ENCODE measurements at regions of chr11 and their contacts with region 1.

Region 1: GRCh38 chr11:47407746-47408590 is at the start of gene SLC39A13:
- DNase-seq: peak; percentile 92 to 94
- ATAC-seq: peak; percentile 84 to 93 (median 89)
- H3K4me3 ChIP-seq: peak within 1 kb of the TSS; percentile 64
- H3K4me3 Mint-ChIP-seq: peak within 1 kb of the TSS; percentile 97
- H3K27ac ChIP-seq: peak within 1 kb of the TSS; percentile 86
- H3K27ac Mint-ChIP-seq: peak within 1 kb of the TSS; percentile 90 to 92
- H3K4me1 ChIP-seq: peaks cover 26% of the 10 kb centered on the region
- H3K4me1 Mint-ChIP-seq: peaks cover 23 to 31% of the 10 kb centered on the region in 2 donors
- H3K27me3 ChIP-seq: no peaks in the 10 kb centered on the region
- H3K27me3 Mint-ChIP-seq: no peaks in the 10 kb centered on the region
- CTCF ChIP-seq: peak; percentile 94
- total RNA-seq, gene SLC39A13: 29.1 to 34.7 (median 32.6) TPM

Region 2: GRCh38 chr11:47176328-47177228 is 231.4 kb before region 1 on chr11 and contains the start of gene ARFGAP2:
- intact Hi-C with region 1: loop called (anchors 10 kb)
- DNase-seq: peak; percentile 97 to 98
- ATAC-seq: peak; percentile 89 to 97 (median 94)
- H3K4me3 ChIP-seq: peak within 1 kb of the TSS; percentile 91
- H3K4me3 Mint-ChIP-seq: peak within 1 kb of the TSS; percentile 97
- H3K27ac ChIP-seq: peak within 1 kb of the TSS; percentile 95
- H3K27ac Mint-ChIP-seq: peak within 1 kb of the TSS; percentile 96
- H3K4me1 ChIP-seq: peaks cover 33% of the 10 kb centered on the region
- H3K4me1 Mint-ChIP-seq: peaks cover 24 to 47% of the 10 kb centered on the region in 2 donors
- H3K27me3 ChIP-seq: no peaks in the 10 kb centered on the region
- H3K27me3 Mint-ChIP-seq: peaks cover 0 to 3% of the 10 kb centered on the region in 2 donors
- CTCF ChIP-seq: no peak
- total RNA-seq, gene ARFGAP2: 199 to 236 (median 228) TPM

Region 3: GRCh38 chr11:47259178-47259977 is 148.6 kb before region 1 on chr11:
- intact Hi-C with region 1: loop called (anchors 5 kb)
- DNase-seq: peak in 1 of 2 donors; percentile 62
- ATAC-seq: peak; percentile 54 to 58 (median 58)
- H3K4me3 ChIP-seq: no peak overlapping the region
- H3K4me3 Mint-ChIP-seq: peak overlapping the region; percentile 37
- H3K27ac ChIP-seq: no peak overlapping the region
- H3K27ac Mint-ChIP-seq: no peak overlapping the region
- H3K4me1 ChIP-seq: peaks cover 29% of the 10 kb centered on the region
- H3K4me1 Mint-ChIP-seq: peaks cover 22 to 32% of the 10 kb centered on the region in 2 donors
- H3K27me3 ChIP-seq: no peaks in the 10 kb centered on the region
- H3K27me3 Mint-ChIP-seq: no peaks in the 10 kb centered on the region
- CTCF ChIP-seq: peak; percentile 22

Region 4: GRCh38 chr11:47340980-47341775 is 66.8 kb before region 1 on chr11:
- intact Hi-C with region 1: no loop called
- DNase-seq: no peak
- ATAC-seq: no peak
- H3K4me3 ChIP-seq: no peak overlapping the region
- H3K4me3 Mint-ChIP-seq: no peak overlapping the region
- H3K27ac ChIP-seq: no peak overlapping the region
- H3K27ac Mint-ChIP-seq: no peak overlapping the region
- H3K4me1 ChIP-seq: no peaks in the 10 kb centered on the region
- H3K4me1 Mint-ChIP-seq: no peaks in the 10 kb centered on the region
- H3K27me3 ChIP-seq: no peaks in the 10 kb centered on the region
- H3K27me3 Mint-ChIP-seq: no peaks in the 10 kb centered on the region
- CTCF ChIP-seq: no peak

Region 5: GRCh38 chr11:47373876-47374720 is 33.9 kb before region 1 on chr11:
- intact Hi-C with region 1: loop called (anchors 1 kb)
- DNase-seq: peak; percentile 82 to 91
- ATAC-seq: peak; percentile 78 to 91 (median 88)
- H3K4me3 ChIP-seq: no peak overlapping the region
- H3K4me3 Mint-ChIP-seq: no peak overlapping the region
- H3K27ac ChIP-seq: no peak overlapping the region
- H3K27ac Mint-ChIP-seq: peak overlapping the region in 1 of 2 donors; percentile 31
- H3K4me1 ChIP-seq: peaks cover 39% of the 10 kb centered on the region
- H3K4me1 Mint-ChIP-seq: peaks cover 0 to 5% of the 10 kb centered on the region in 2 donors
- H3K27me3 ChIP-seq: no peaks in the 10 kb centered on the region
- H3K27me3 Mint-ChIP-seq: no peaks in the 10 kb centered on the region
- CTCF ChIP-seq: peak; percentile 96

Region 6: GRCh38 chr11:47387911-47388678 is 19.9 kb before region 1 on chr11:
- intact Hi-C with region 1: loop called (anchors 2 kb)
- DNase-seq: no peak
- ATAC-seq: no peak
- H3K4me3 ChIP-seq: no peak overlapping the region
- H3K4me3 Mint-ChIP-seq: peak overlapping the region; percentile 56
- H3K27ac ChIP-seq: no peak overlapping the region
- H3K27ac Mint-ChIP-seq: peak overlapping the region in 1 of 2 donors; percentile 33
- H3K4me1 ChIP-seq: peaks cover 58% of the 10 kb centered on the region
- H3K4me1 Mint-ChIP-seq: peaks cover 42 to 52% of the 10 kb centered on the region in 2 donors
- H3K27me3 ChIP-seq: no peaks in the 10 kb centered on the region
- H3K27me3 Mint-ChIP-seq: no peaks in the 10 kb centered on the region
- CTCF ChIP-seq: no peak

Region 7: GRCh38 chr11:47426061-47426956 is 18.3 kb after region 1 on chr11 and contains the start of gene PSMC3:
- intact Hi-C with region 1: loop called (anchors 1 kb)
- DNase-seq: peak; percentile 97 to 98
- ATAC-seq: peak; percentile 96 to 99 (median 96)
- H3K4me3 ChIP-seq: peak within 1 kb of the TSS; percentile 90
- H3K4me3 Mint-ChIP-seq: peak within 1 kb of the TSS; percentile 100
- H3K27ac ChIP-seq: peak within 1 kb of the TSS; percentile 81
- H3K27ac Mint-ChIP-seq: peak within 1 kb of the TSS; percentile 94 to 99
- H3K4me1 ChIP-seq: peaks cover 14% of the 10 kb centered on the region
- H3K4me1 Mint-ChIP-seq: peaks cover 27 to 28% of the 10 kb centered on the region in 2 donors
- H3K27me3 ChIP-seq: no peaks in the 10 kb centered on the region
- H3K27me3 Mint-ChIP-seq: no peaks in the 10 kb centered on the region
- CTCF ChIP-seq: no peak
- total RNA-seq, gene PSMC3: 74.0 to 85.9 (median 77.7) TPM